ENCODE measurements at regions of chr2 and their contacts with region 1.

Region 1: GRCh38 chr2:101252408-101253012 is at the start of gene CNOT11:
- DNase-seq: peak; percentile 98 to 99 (median 99)
- ATAC-seq: peak; percentile 80
- H3K4me3 ChIP-seq: peak within 1 kb of the TSS; percentile 76 to 84
- H3K4me3 Mint-ChIP-seq: peak within 1 kb of the TSS; percentile 93
- H3K27ac ChIP-seq: peak within 1 kb of the TSS; percentile 93 to 95
- H3K27ac Mint-ChIP-seq: peak within 1 kb of the TSS; percentile 95
- H3K4me1 ChIP-seq: peaks cover 35% of the 10 kb centered on the region
- H3K4me1 Mint-ChIP-seq: peaks cover 47% of the 10 kb centered on the region
- H3K27me3 ChIP-seq: no peaks in the 10 kb centered on the region
- H3K27me3 Mint-ChIP-seq: no peaks in the 10 kb centered on the region
- CTCF ChIP-seq: no peak
- total RNA-seq, gene CNOT11: 41.9 to 43.0 TPM

Region 2: DNA sequence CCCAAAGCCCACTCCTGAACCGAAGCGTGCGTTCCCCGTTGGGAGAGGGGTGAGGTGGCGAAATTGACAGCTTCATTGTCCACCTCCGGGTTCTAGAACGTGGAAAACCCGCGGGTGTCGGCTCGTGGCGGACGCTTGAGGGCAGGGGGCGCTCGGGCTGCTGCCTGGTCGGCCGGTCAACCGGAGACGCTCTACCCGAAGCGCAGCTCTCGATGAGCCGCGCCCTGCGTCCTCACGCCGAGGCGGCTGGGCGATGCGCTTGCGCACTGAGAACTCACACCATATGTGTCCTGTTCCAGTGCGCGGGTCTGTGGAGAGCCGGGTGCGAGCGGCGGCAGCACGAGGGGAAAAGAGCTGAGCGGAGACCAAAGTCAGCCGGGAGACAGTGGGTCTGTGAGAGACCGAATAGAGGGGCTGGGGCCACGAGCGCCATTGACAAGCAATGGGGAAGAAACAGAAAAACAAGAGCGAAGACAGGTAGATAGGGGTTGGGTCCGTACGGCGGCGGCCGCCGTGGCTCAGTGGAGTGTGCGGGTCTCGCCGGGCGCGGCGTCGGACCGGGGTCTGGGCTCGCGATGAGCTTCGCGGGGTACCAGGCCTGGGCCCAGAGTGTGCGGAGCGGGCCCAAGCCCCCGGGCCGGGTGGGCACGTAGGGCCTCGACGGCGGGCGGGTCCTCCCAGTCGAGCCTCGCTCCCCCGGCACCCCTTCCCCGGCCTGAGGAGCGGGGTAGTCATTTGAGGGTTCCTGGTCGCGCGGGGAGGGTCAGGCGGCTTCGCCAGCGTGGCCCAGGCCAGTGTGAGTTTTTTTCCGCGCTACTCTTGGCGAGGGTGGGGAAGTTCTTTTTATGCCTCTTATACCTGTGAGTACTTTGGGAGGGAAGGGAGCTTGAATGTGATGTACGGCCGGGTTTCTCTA is 1915.1 kb before region 1 on chr2 and contains the start of gene EIF5B:
- CTCF ChIA-PET with region 1: no interaction called
- POLR2A ChIA-PET with region 1: no interaction called
- intact Hi-C with region 1: loop called in 1 of 2 experiments (anchors 10 kb)
- DNase-seq: peak; percentile 85 to 97 (median 93)
- ATAC-seq: peak; percentile 62
- H3K4me3 ChIP-seq: peak within 1 kb of the TSS; percentile 76 to 79
- H3K4me3 Mint-ChIP-seq: no peak within 1 kb of the TSS
- H3K27ac ChIP-seq: peak within 1 kb of the TSS; percentile 76 to 89
- H3K27ac Mint-ChIP-seq: no peak within 1 kb of the TSS
- H3K4me1 ChIP-seq: peaks cover 30% of the 10 kb centered on the region
- H3K4me1 Mint-ChIP-seq: peaks cover 42% of the 10 kb centered on the region
- H3K27me3 ChIP-seq: no peaks in the 10 kb centered on the region
- H3K27me3 Mint-ChIP-seq: no peaks in the 10 kb centered on the region
- CTCF ChIP-seq: no peak
- total RNA-seq, gene EIF5B: 29.2 to 30.4 TPM

Region 3: GRCh38 chr2:100580367-100581276 is 671.9 kb before region 1 on chr2:
- CTCF ChIA-PET with region 1: no interaction called
- POLR2A ChIA-PET with region 1: no interaction called
- intact Hi-C with region 1: loop called in 1 of 2 experiments (anchors 5 kb)
- DNase-seq: peak; percentile 37 to 91 (median 65)
- ATAC-seq: peak; percentile 77
- H3K4me3 ChIP-seq: peak overlapping the region; percentile 27 to 34
- H3K4me3 Mint-ChIP-seq: peak overlapping the region; percentile 68
- H3K27ac ChIP-seq: peak overlapping the region; percentile 75 to 87
- H3K27ac Mint-ChIP-seq: peak overlapping the region; percentile 99
- H3K4me1 ChIP-seq: peaks cover 35% of the 10 kb centered on the region
- H3K4me1 Mint-ChIP-seq: peaks cover 39% of the 10 kb centered on the region
- H3K27me3 ChIP-seq: no peaks in the 10 kb centered on the region
- H3K27me3 Mint-ChIP-seq: no peaks in the 10 kb centered on the region
- CTCF ChIP-seq: no peak

Region 4: DNA sequence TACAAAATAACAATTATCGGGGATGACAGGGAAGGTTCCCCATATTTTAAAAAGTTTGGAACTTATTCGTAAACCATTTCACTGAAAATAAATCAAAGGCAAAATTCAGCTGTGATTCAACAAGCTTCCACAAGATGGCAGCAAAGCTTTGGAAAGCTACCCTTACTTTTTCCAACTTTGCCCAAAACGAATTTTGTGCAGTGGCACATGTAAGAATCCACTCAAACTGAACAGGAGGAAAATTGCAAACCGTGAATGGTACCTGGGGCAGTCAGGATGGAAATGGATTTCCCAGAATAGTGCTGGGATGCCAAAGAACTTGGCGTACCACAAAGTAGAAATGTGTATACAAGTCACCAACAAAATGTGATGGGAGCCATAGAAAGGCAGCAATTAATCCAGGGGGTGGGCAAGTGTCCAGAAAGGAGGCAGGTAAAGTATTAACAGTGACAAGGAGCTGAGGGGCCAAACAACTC is 239.8 kb before region 1 on chr2:
- CTCF ChIA-PET with region 1: interaction called, 4 read pairs
- POLR2A ChIA-PET with region 1: no interaction called
- intact Hi-C with region 1: loop called in 1 of 2 experiments (anchors 1 kb)
- DNase-seq: peak in 6 of 9 experiments; percentile 11 to 65 (median 44)
- ATAC-seq: peak; percentile 38
- H3K4me3 ChIP-seq: no peak overlapping the region
- H3K4me3 Mint-ChIP-seq: no peak overlapping the region
- H3K27ac ChIP-seq: no peak overlapping the region
- H3K27ac Mint-ChIP-seq: no peak overlapping the region
- H3K4me1 ChIP-seq: no peaks in the 10 kb centered on the region
- H3K4me1 Mint-ChIP-seq: peaks cover 15% of the 10 kb centered on the region
- H3K27me3 ChIP-seq: no peaks in the 10 kb centered on the region
- H3K27me3 Mint-ChIP-seq: no peaks in the 10 kb centered on the region
- CTCF ChIP-seq: peak; percentile 96

Region 5: DNA sequence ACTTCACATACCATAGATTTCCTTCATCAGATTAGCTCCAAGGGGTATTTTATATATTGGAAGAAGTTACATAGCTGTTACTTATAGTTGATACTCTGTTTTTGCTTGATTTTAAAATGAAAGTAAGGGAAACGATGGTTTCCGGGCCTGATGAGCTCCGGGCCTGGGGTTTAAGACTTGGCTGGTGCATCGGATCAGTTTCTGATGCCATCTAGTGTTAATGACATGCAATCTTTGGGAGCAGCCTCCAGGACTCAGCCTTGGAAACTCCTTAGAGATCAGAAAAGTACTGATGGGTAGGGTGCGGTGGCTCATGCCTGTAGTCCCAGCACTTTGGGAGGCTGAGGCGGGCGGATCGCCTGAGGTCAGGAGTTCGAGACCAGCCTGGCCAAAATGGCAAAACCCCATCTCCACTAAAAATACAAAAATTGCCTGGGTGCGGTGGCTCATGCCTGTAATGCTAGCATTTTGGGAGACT is 47.0 kb before region 1 on chr2:
- CTCF ChIA-PET with region 1: interaction called, 5 read pairs
- POLR2A ChIA-PET with region 1: no interaction called
- intact Hi-C with region 1: loop called in 1 of 2 experiments (anchors 5 kb)
- DNase-seq: peak in 7 of 9 experiments; percentile 18 to 73 (median 48)
- ATAC-seq: peak; percentile 73
- H3K4me3 ChIP-seq: no peak overlapping the region
- H3K4me3 Mint-ChIP-seq: peak overlapping the region; percentile 70
- H3K27ac ChIP-seq: peak overlapping the region in 1 of 2 experiments; percentile 52
- H3K27ac Mint-ChIP-seq: peak overlapping the region; percentile 73
- H3K4me1 ChIP-seq: peaks cover 4% of the 10 kb centered on the region
- H3K4me1 Mint-ChIP-seq: peaks cover 12% of the 10 kb centered on the region
- H3K27me3 ChIP-seq: no peaks in the 10 kb centered on the region
- H3K27me3 Mint-ChIP-seq: no peaks in the 10 kb centered on the region
- CTCF ChIP-seq: peak; percentile 26

Region 6: GRCh38 chr2:101267671-101268656 is 15.5 kb after region 1 on chr2:
- CTCF ChIA-PET with region 1: interaction called, 5 read pairs
- POLR2A ChIA-PET with region 1: interaction called, 8 read pairs
- intact Hi-C with region 1: loop called in 1 of 2 experiments (anchors 1 kb)
- DNase-seq: no peak
- ATAC-seq: no peak
- H3K4me3 ChIP-seq: no peak overlapping the region
- H3K4me3 Mint-ChIP-seq: no peak overlapping the region
- H3K27ac ChIP-seq: peak overlapping the region in 1 of 2 experiments; percentile 3
- H3K27ac Mint-ChIP-seq: peak overlapping the region; percentile 72
- H3K4me1 ChIP-seq: peaks cover 8% of the 10 kb centered on the region
- H3K4me1 Mint-ChIP-seq: peaks cover 48% of the 10 kb centered on the region
- H3K27me3 ChIP-seq: no peaks in the 10 kb centered on the region
- H3K27me3 Mint-ChIP-seq: no peaks in the 10 kb centered on the region
- CTCF ChIP-seq: no peak

Region 7: DNA sequence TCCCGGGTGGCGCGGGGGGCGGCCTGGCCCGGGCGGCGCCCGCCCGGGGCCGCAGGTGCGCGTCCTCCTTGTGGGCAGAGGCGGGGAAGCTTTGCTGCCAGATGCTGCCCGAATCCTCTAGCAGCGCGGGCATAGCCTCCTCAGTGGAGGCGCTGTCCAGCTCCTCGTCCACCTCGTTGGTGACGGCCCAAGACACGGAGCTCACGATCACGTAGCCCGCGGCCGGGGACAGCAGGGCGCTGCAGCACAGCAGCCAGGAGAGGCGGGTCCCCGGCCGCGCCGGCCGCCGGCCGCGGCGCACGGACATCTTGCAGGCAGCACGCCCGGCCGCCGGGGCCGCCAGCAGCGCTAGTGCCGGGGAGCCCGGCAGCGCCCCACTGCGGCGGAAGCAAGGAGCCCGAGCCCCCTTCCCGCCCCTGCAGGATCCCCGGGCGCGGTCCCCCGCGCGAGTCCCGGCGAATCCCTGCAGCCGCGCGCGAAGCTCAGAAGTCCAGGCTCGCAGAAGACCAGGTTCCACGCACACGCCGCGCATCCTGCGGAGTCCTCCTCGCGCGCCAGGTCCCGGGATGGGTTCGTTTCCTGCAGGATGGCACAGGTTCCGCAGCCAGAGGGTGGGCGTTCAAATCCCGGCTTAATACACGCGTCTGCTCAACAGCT is 134.8 kb after region 1 on chr2 and contains the start of gene CREG2:
- CTCF ChIA-PET with region 1: no interaction called
- POLR2A ChIA-PET with region 1: interaction called, 3 read pairs
- intact Hi-C with region 1: loop called in 1 of 2 experiments (anchors 5 kb)
- DNase-seq: peak; percentile 20 to 73 (median 50)
- ATAC-seq: peak; percentile 90
- H3K4me3 ChIP-seq: peak within 1 kb of the TSS; percentile 33 to 37
- H3K4me3 Mint-ChIP-seq: peak within 1 kb of the TSS; percentile 73
- H3K27ac ChIP-seq: no peak within 1 kb of the TSS
- H3K27ac Mint-ChIP-seq: no peak within 1 kb of the TSS
- H3K4me1 ChIP-seq: peaks cover 4% of the 10 kb centered on the region
- H3K4me1 Mint-ChIP-seq: peaks cover 14% of the 10 kb centered on the region
- H3K27me3 ChIP-seq: peaks cover 9 to 13% of the 10 kb centered on the region in 2 experiments
- H3K27me3 Mint-ChIP-seq: peaks cover 47% of the 10 kb centered on the region
- CTCF ChIP-seq: peak; percentile 61
- total RNA-seq, gene CREG2: not detected

Region 8: GRCh38 chr2:101706819-101707177 is 454.3 kb after region 1 on chr2:
- CTCF ChIA-PET with region 1: no interaction called
- POLR2A ChIA-PET with region 1: no interaction called
- intact Hi-C with region 1: no loop called
- DNase-seq: peak in 3 of 9 experiments; percentile 39 to 79 (median 62)
- ATAC-seq: peak; percentile 58
- H3K4me3 ChIP-seq: peak overlapping the region in 1 of 2 experiments; percentile 2
- H3K4me3 Mint-ChIP-seq: peak overlapping the region; percentile 62
- H3K27ac ChIP-seq: peak overlapping the region; percentile 18 to 69
- H3K27ac Mint-ChIP-seq: peak overlapping the region; percentile 93
- H3K4me1 ChIP-seq: peaks cover 91% of the 10 kb centered on the region
- H3K4me1 Mint-ChIP-seq: peaks cover 88% of the 10 kb centered on the region
- H3K27me3 ChIP-seq: no peaks in the 10 kb centered on the region
- H3K27me3 Mint-ChIP-seq: no peaks in the 10 kb centered on the region
- CTCF ChIP-seq: no peak